Stomach (tissue), 19 donors: ENCODE measurements at regions of chr1 and their contacts with region 1.

Region 1: DNA sequence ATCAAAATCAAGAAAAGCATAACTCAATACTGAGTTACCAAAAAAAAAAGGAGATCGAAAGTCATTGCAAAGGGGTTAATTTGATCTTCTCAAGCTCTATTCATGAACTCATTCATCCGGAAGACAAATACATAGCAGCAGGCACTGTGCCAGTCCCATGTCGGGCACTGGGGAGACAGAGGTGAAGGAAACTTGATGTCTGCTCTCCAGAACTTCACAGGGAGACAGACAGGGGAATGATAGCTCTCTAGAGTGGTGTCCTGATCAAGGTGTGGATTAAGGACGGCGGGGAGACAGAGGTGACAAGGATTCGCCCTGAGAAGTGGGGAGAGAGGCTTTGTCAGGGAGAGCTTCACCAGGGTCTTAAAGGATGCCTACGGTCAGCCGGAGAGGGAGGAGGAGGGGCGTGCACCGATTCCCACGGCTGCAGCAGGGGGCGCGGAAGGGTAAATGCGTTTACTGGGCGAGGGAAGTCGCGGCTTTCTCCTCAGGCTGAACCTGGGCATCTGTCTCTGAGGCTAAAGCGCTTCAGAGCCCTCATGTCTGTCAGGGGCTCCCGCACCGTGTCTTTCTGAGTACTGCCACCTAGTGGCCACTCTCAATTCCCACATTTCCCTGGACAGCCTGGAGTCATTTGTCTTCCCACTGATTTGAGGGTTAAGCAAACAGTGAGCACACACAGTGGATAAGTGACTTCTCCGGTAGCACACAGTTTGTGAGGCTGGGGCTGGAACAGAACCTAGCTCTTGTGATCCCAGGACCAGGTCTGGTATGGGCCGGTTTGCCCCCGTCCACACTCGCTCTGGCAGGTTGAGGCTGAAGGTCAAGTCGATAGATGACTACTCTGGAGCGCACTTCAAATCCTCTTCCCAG is 152.8 kb downstream of the TENT5C start:
- DNase-seq: peak; percentile 82 to 93
- H3K4me3 ChIP-seq: peak overlapping the region; percentile 38 to 52 (median 44)
- H3K27ac ChIP-seq: peak overlapping the region in 3 of 5 donors; percentile 35 to 81 (median 46)
- H3K4me1 ChIP-seq: peaks cover 8 to 26% (median 21%) of the 10 kb centered on the region in 4 donors
- H3K27me3 ChIP-seq: no peaks in the 10 kb centered on the region
- CTCF ChIP-seq: peak in 5 of 7 experiments; percentile 71 to 90 (median 85)
- EP300 ChIP-seq: no peak
- POLR2A ChIP-seq: no peak

Region 2: GRCh38 chr1:117512743-117513321 is 245.8 kb before region 1 on chr1:
- intact Hi-C with region 1: loop called (anchors 5 kb)
- DNase-seq: peak in 1 of 2 donors; percentile 56
- H3K4me3 ChIP-seq: no peak overlapping the region
- H3K27ac ChIP-seq: no peak overlapping the region
- H3K4me1 ChIP-seq: no peaks in the 10 kb centered on the region
- H3K27me3 ChIP-seq: no peaks in the 10 kb centered on the region
- CTCF ChIP-seq: peak in 4 of 7 experiments; percentile 33 to 49 (median 42)
- EP300 ChIP-seq: no peak
- POLR2A ChIP-seq: no peak

Region 3: GRCh38 chr1:117534995-117535467 is 223.6 kb before region 1 on chr1:
- intact Hi-C with region 1: loop called (anchors 10 kb)
- DNase-seq: peak; percentile 65 to 85
- H3K4me3 ChIP-seq: no peak overlapping the region
- H3K27ac ChIP-seq: peak overlapping the region in 3 of 5 donors; percentile 3 to 47 (median 28)
- H3K4me1 ChIP-seq: peaks cover 0 to 13% (median 9%) of the 10 kb centered on the region in 4 donors
- H3K27me3 ChIP-seq: no peaks in the 10 kb centered on the region
- CTCF ChIP-seq: peak in 5 of 7 experiments; percentile 44 to 86 (median 72)
- EP300 ChIP-seq: no peak
- POLR2A ChIP-seq: no peak